ENCODE measurements at regions of chr7 and their contacts with region 1.

Region 1: GRCh38 chr7:83365746-83366145 is 203.1 kb upstream of the PCLO start:
- DNase-seq: no peak
- H3K4me3 ChIP-seq: no peak overlapping the region
- H3K4me3 Mint-ChIP-seq: no peak overlapping the region
- H3K27ac Mint-ChIP-seq: no peak overlapping the region
- H3K4me1 ChIP-seq: no peaks in the 10 kb centered on the region
- H3K4me1 Mint-ChIP-seq: no peaks in the 10 kb centered on the region
- H3K27me3 ChIP-seq: no peaks in the 10 kb centered on the region
- H3K27me3 Mint-ChIP-seq: peaks cover 2% of the 10 kb centered on the region
- CTCF ChIP-seq: no peak

Region 2: DNA sequence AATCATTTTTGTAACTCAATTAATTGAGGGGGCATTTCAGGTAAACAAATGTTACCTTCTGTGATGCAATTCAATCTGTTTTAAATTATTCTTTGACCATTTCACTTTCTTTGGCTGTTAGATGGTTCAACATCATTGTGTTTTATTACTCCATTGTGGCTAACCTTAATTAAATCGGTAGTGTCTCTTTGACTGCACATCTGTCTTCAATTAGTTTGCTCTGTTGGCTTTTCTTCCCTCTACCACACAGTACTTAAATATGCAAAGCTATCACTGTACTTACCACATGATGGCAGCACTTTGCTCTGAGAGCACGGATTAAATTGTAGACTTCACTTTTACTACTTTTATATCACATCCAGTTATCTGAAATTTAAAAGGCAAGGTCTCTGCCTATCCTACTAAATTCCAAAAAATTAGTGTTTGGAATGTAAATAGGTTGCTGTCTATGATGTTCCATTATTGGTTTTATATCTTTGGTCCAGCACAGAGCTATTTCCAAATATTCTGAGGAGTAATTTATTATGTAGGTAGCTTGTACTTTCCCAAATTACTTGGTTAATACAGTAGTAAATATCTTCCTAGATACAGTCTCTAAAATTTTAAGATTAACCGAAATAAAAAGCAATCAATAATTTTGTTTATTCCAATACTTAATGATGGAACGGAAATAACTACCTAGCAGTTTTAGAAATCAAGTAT is 555.0 kb before region 1 on chr7:
- CTCF ChIA-PET with region 1: no interaction called
- POLR2A ChIA-PET with region 1: no interaction called
- intact Hi-C with region 1: loop called (anchors 5 kb)
- DNase-seq: peak in 1 of 2 experiments; percentile 23
- H3K4me3 ChIP-seq: no peak overlapping the region
- H3K4me3 Mint-ChIP-seq: no peak overlapping the region
- H3K27ac Mint-ChIP-seq: no peak overlapping the region
- H3K4me1 ChIP-seq: no peaks in the 10 kb centered on the region
- H3K4me1 Mint-ChIP-seq: no peaks in the 10 kb centered on the region
- H3K27me3 ChIP-seq: no peaks in the 10 kb centered on the region
- H3K27me3 Mint-ChIP-seq: no peaks in the 10 kb centered on the region
- CTCF ChIP-seq: peak; percentile 43 to 65

Region 3: DNA sequence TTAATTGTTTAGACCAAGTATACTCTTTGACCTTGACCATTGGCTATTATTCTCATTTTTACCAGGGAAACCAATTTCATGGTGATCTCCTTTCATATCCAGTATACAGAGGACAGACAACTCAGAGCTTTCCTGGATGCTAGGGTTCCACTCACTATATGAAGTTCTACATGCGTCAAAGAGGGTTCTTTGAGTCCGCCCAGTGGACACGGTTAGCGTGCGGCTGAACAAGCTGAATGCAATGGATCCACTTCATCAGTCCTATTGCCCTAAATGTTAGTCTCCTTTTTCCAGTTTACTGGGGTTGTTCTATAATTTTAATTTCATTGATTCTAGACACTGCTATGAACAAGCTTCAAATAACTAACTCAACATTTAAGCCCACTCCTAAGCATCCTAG is 40.7 kb before region 1 on chr7:
- CTCF ChIA-PET with region 1: no interaction called
- POLR2A ChIA-PET with region 1: no interaction called
- intact Hi-C with region 1: loop called (anchors 1 kb)
- DNase-seq: no peak
- H3K4me3 ChIP-seq: no peak overlapping the region
- H3K4me3 Mint-ChIP-seq: no peak overlapping the region
- H3K27ac Mint-ChIP-seq: no peak overlapping the region
- H3K4me1 ChIP-seq: peaks cover 8% of the 10 kb centered on the region; the same call in 1 of the 2 replicates
- H3K4me1 Mint-ChIP-seq: no peaks in the 10 kb centered on the region
- H3K27me3 ChIP-seq: no peaks in the 10 kb centered on the region
- H3K27me3 Mint-ChIP-seq: no peaks in the 10 kb centered on the region
- CTCF ChIP-seq: no peak

Region 4: DNA sequence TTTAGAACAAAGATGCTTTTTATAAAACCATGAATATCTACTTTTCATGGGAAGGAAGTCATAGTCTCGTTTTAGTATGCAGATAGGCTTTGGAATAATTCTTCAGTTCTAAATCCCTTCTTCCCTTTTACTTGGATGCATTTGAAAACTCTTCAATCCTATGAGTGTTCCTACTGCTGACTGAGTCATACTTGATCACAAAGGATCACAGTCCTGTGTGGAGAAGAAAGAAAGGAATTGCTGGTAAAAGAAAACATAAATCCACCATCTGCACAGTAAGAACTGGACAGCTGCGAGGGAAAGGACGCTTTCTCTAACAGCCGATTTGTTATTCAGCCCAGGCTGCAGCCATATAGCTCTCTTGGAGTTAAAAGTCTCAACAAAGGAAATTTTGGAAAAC is 73.3 kb after region 1 on chr7:
- CTCF ChIA-PET with region 1: no interaction called
- POLR2A ChIA-PET with region 1: no interaction called
- intact Hi-C with region 1: no loop called
- DNase-seq: no peak
- H3K4me3 ChIP-seq: no peak overlapping the region
- H3K4me3 Mint-ChIP-seq: no peak overlapping the region
- H3K27ac Mint-ChIP-seq: no peak overlapping the region
- H3K4me1 ChIP-seq: no peaks in the 10 kb centered on the region
- H3K4me1 Mint-ChIP-seq: no peaks in the 10 kb centered on the region
- H3K27me3 ChIP-seq: no peaks in the 10 kb centered on the region
- H3K27me3 Mint-ChIP-seq: peaks cover 7% of the 10 kb centered on the region
- CTCF ChIP-seq: no peak

Region 5: GRCh38 chr7:84675633-84676034 is 1309.9 kb after region 1 on chr7:
- CTCF ChIA-PET with region 1: no interaction called
- POLR2A ChIA-PET with region 1: no interaction called
- intact Hi-C with region 1: no loop called
- DNase-seq: peak; percentile 12 to 34
- H3K4me3 ChIP-seq: no peak overlapping the region
- H3K4me3 Mint-ChIP-seq: no peak overlapping the region
- H3K27ac Mint-ChIP-seq: no peak overlapping the region
- H3K4me1 ChIP-seq: no peaks in the 10 kb centered on the region; the same call in 1 of the 2 replicates
- H3K4me1 Mint-ChIP-seq: no peaks in the 10 kb centered on the region
- H3K27me3 ChIP-seq: no peaks in the 10 kb centered on the region
- H3K27me3 Mint-ChIP-seq: no peaks in the 10 kb centered on the region
- CTCF ChIP-seq: no peak